GM10248 (cell line): ENCODE measurements at regions of chr9 and their contacts with region 1.

Region 1: DNA sequence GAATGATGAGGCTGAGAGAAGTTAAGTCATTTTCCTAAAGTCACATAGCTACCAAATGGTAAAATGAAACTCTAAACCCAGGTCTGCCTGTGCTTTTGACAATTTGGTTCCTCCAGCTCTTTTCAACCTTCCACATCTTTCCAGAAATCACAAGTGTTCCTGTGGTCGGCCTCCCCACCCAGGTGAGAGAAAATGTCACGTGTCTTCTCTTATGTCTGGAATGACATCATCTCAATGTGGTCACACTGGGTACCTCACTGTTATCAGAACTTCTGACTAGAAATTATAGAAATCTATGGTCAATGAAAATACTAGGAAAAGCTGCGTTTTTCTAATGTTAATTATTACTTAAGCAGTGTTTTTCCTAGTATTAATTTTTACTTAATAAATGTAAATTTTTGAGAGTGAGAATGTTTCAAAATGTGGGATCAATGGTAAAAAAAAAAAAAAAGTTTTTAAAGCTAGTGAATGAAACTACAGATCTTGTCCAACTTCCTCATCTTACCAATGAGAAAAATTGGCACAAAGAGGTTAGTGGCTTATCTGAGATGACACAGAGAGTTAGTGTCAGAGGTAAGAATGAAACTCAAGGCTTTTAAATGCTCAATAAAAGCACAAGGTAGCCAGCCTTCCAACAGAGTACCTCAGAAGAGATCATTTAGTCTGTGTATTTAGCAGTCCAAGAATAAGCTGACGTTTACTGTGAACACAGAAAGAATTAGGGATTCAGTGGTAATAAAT is 228.7 kb upstream of the NR4A3 start:
- DNase-seq: no peak
- CTCF ChIP-seq: no peak

Region 2: GRCh38 chr9:99605016-99605743 is 12.2 kb after region 1 on chr9:
- CTCF ChIA-PET with region 1: interaction called, 12 read pairs
- POLR2A ChIA-PET with region 1: no interaction called
- DNase-seq: no peak
- CTCF ChIP-seq: no peak